Left colon (tissue), 2 donors: ENCODE measurements at regions of chr10 and their contacts with region 1.

Region 1: GRCh38 chr10:21953585-21954057 is 49.9 kb downstream of the DNAJC1 start:
- DNase-seq: no peak
- ATAC-seq: peak; percentile 55

Region 2: GRCh38 chr10:21278491-21279239 is 675.0 kb before region 1 on chr10:
- intact Hi-C with region 1: loop called in 1 of 2 experiments (anchors 10 kb)
- DNase-seq: peak; percentile 74 to 95
- ATAC-seq: peak; percentile 92

Region 3: DNA sequence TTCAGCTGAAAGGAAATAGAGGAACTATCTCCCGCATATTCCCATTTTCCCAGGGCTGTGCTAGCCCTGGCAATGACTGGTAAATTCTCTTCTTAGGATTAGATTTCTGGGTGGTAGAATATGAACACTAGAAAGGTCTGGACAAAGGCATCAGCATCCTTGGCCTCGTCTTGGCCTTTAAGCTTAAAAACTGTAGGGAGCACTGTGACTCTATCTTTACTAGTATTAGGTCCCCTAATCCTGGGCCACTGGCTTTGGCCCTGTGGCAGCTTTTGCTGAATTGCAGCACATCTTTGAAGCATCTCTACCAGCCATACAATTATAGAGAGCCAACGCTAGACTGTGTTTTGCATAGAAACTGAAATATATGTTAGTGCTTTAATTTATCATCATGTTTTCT is 305.7 kb after region 1 on chr10:
- intact Hi-C with region 1: no loop called
- DNase-seq: no peak
- ATAC-seq: no peak

Region 4: DNA sequence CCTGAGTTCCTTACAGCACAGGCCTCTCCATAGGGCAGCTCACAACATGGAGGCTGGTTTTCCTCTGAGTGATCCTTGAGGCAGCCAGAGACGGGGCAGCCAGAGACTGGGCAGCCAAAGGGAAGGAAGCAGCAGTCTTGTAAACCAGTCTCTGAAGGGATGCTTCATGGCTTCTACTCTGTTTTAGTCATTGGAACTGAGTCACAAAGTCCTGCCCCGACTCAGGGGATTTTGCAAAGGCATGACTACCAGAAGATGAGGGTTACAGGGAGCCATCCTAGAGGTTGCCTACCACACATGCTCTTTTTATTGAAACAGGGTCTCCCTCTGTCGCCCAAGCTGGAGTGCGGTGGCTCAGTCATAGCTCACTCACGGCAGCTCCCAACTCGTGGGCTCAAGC is 318.2 kb after region 1 on chr10:
- intact Hi-C with region 1: no loop called
- DNase-seq: no peak
- ATAC-seq: no peak